Posterior cingulate gyrus (tissue), 11 donors: ENCODE measurements at regions of chr9 and their contacts with region 1.

Region 1: DNA sequence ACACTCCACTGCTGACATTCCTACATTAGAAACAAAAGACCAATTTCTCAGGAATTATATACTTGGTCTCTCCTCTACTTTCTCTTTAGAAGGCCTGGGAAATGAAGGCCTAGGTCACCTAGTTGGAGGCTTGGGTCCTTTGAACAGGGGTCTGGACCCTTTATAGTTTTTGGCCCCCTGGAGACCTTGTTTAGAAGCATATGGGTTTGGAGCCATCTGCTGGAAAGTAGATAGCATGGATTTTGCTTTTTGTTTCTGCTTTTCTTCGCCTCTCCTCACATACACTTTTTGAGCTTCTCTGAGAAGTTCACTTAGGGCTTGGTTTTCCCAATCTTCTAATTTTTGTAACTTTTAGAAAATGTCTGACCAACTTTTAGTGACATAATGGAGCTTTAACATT is 67.1 kb upstream of the CDK20 start:
- DNase-seq: no peak

Region 2: GRCh38 chr9:87684627-87685219 is 356.7 kb before region 1 on chr9:
- intact Hi-C with region 1: loop called (anchors 2 kb)
- DNase-seq: peak in 7 of 10 donors; percentile 52 to 93 (median 73)